MCF 10A (cell line): ENCODE measurements at regions of chr1 and their contacts with region 1.

Region 1: DNA sequence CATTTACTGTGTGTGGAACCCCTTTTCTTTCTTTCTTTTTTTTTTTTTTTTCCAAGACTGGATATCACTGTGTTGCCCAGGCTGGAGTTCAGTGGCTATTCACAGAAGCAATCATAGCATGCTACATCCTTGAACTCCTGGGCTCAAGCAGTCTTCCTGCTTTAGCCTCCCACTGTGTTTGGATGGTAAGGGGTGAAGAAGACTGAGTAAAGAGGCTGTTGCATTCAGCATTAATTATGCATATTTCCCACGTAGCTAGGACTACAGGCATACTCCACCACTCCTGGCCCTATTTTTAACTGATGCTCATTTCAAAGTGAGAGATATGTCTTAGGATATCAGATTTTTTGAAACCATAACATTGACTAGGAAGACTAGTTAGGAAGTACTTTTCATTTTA is 39.5 kb downstream of the PHACTR4 start:
- DNase-seq: no peak
- H3K4me3 Mint-ChIP-seq: no peak overlapping the region
- H3K27ac Mint-ChIP-seq: no peak overlapping the region
- H3K4me1 Mint-ChIP-seq: no peaks in the 10 kb centered on the region
- H3K27me3 Mint-ChIP-seq: no peaks in the 10 kb centered on the region
- CTCF ChIP-seq: no peak

Region 2: DNA sequence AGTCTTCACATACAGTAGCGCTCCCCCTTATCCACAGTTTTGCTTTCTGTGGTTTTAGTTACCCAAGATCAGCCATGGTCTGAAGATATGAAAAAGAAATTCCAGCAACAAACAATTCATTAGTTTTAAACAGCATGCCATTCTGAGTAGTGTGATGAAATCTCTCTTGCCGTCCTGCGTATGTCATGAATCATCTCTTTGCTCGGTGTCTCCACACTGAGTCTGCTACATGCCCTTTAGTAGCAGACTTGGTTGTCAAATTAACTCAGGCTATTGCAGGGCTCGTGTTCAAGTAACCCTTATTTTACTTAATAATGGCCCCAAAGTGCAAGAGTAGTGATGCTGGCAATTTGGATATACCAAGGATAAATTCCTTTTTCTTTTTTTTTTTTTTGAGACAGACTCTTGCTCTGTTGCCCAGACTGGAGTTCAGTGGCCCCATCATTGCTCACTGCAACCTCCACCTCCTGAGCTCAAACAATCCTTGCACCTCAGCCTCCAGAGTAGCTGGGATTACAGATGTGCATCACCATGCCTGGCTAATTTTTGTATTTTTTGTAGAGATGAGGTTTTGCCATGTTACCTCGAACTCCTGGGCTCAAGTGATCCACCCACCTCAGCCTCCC is 16.9 kb before region 1 on chr1:
- CTCF ChIA-PET with region 1: interaction called, 15 read pairs
- POLR2A ChIA-PET with region 1: interaction called, 3 read pairs
- intact Hi-C with region 1: no loop called
- DNase-seq: peak; percentile 88
- H3K4me3 Mint-ChIP-seq: peak overlapping the region; percentile 65
- H3K27ac Mint-ChIP-seq: peak overlapping the region; percentile 88
- H3K4me1 Mint-ChIP-seq: peaks cover 11% of the 10 kb centered on the region
- H3K27me3 Mint-ChIP-seq: no peaks in the 10 kb centered on the region
- CTCF ChIP-seq: no peak

Region 3: GRCh38 chr1:28437934-28438699 is 29.0 kb after region 1 on chr1:
- CTCF ChIA-PET with region 1: no interaction called
- POLR2A ChIA-PET with region 1: interaction called, 15 read pairs
- intact Hi-C with region 1: no loop called
- DNase-seq: peak; percentile 98
- H3K4me3 Mint-ChIP-seq: peak overlapping the region; percentile 89
- H3K27ac Mint-ChIP-seq: peak overlapping the region; percentile 93
- H3K4me1 Mint-ChIP-seq: peaks cover 21% of the 10 kb centered on the region
- H3K27me3 Mint-ChIP-seq: no peaks in the 10 kb centered on the region
- CTCF ChIP-seq: no peak

Region 4: GRCh38 chr1:28470146-28470545 is 61.1 kb after region 1 on chr1:
- CTCF ChIA-PET with region 1: interaction called, 6 read pairs
- POLR2A ChIA-PET with region 1: no interaction called
- intact Hi-C with region 1: loop called (anchors 1 kb)
- DNase-seq: peak; percentile 18
- H3K4me3 Mint-ChIP-seq: no peak overlapping the region
- H3K27ac Mint-ChIP-seq: no peak overlapping the region
- H3K4me1 Mint-ChIP-seq: no peaks in the 10 kb centered on the region
- H3K27me3 Mint-ChIP-seq: no peaks in the 10 kb centered on the region
- CTCF ChIP-seq: no peak

Region 5: DNA sequence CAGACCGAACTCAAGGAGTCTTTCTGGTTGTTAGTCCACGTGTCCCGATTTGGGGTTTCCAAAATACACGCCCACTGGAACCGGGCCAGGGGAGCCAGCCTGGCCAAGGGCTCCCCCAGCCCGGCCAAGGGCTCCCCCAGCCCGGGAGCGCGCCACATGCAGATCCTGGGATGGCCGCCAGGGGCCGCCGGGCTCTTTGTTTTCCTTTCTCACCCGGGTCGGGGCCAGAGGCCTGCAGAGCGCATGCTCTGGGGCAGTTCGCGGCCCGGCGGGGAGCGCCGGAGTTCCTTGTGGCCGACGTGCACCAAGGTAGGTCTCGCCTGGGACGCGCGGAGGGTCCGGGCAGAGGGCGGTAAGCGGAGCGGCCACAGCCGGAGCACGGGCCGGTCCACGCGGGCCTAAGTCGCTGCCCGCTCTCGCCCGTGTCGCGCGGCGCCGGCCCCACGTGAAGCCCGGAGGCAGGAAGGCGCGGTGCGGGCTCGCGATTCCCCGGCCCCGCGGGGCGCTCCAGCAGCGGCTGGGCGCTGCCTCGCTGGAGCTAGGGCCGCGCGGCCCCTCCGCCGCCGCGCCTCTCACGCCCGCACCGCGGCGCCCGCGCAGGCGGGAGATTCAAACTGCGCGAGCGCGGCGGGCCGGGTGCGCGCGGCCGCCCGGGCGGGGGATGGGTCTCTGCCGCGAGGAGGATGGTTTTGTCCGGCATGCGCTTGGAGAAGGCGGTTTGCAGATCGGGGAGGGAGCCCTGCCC is 109.1 kb after region 1 on chr1:
- CTCF ChIA-PET with region 1: interaction called, 15 read pairs
- POLR2A ChIA-PET with region 1: interaction called, 6 read pairs
- intact Hi-C with region 1: no loop called
- DNase-seq: peak; percentile 89
- H3K4me3 Mint-ChIP-seq: peak overlapping the region; percentile 69
- H3K27ac Mint-ChIP-seq: peak overlapping the region; percentile 75
- H3K4me1 Mint-ChIP-seq: peaks cover 29% of the 10 kb centered on the region
- H3K27me3 Mint-ChIP-seq: no peaks in the 10 kb centered on the region
- CTCF ChIP-seq: peak; percentile 93

Region 6: GRCh38 chr1:28602536-28603439 is 193.7 kb after region 1 on chr1:
- CTCF ChIA-PET with region 1: interaction called, 6 read pairs
- POLR2A ChIA-PET with region 1: interaction called, 3 read pairs
- intact Hi-C with region 1: loop called (anchors 2 kb)
- DNase-seq: peak; percentile 87
- H3K4me3 Mint-ChIP-seq: no peak overlapping the region
- H3K27ac Mint-ChIP-seq: no peak overlapping the region
- H3K4me1 Mint-ChIP-seq: peaks cover 10% of the 10 kb centered on the region
- H3K27me3 Mint-ChIP-seq: no peaks in the 10 kb centered on the region
- CTCF ChIP-seq: peak; percentile 76